HepG2 (cell line): ENCODE measurements at regions of chr15 and their contacts with region 1.

Region 1: DNA sequence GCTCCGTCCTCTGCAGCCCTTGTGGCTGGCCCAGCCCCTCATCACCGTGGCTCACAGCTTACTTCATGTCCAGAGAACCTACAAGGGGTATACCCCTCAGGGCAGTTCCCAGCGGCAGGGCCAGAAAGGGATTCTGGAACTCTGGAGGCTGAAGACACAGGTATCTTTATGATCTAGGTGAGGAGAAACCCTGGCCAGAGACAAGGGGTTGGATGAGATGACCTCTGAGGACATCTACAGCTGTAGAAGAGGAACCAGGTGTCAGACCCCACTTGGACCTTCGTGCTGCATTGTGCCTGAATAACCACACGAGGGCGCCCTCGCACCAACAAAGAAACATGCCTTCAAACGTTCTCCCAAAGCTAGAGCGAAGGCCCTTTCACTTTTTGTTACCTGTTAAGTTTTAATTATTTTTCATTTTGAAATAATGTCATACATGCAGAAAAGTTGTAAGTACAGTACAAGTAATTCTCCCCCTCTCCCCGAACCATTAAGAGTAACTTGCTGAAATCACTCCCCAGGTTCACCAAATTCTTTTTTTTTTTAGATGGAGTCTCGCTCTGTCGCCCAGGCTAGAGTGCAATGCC is 118.7 kb upstream of the SMAD3 start:
- DNase-seq: peak; percentile 67
- ATAC-seq: peak; percentile 65
- H3K4me3 ChIP-seq: peak overlapping the region in 1 of 3 experiments; percentile 25; a peak in 1 of 6 replicates
- H3K27ac ChIP-seq: no peak overlapping the region
- H3K4me1 ChIP-seq: peaks cover 42% of the 10 kb centered on the region
- H3K27me3 ChIP-seq: peaks cover 1 to 16% of the 10 kb centered on the region in 2 experiments; a peak in 3 of 5 replicates
- CTCF ChIP-seq: peak; percentile 93
- EP300 ChIP-seq: no peak
- POLR2A ChIP-seq: no peak
- RAD21 ChIP-seq: peak; percentile 89

Region 2: GRCh38 chr15:66865622-66866611 is 80.8 kb before region 1 on chr15:
- CTCF ChIA-PET with region 1: no interaction called
- POLR2A ChIA-PET with region 1: no interaction called
- in situ Hi-C with region 1: no loop called
- intact Hi-C with region 1: no loop called
- DNase-seq: no peak
- ATAC-seq: no peak
- H3K4me3 ChIP-seq: no peak overlapping the region
- H3K27ac ChIP-seq: no peak overlapping the region
- H3K4me1 ChIP-seq: no peaks in the 10 kb centered on the region
- H3K27me3 ChIP-seq: peaks cover 0 to 6% of the 10 kb centered on the region in 2 experiments; a peak in 2 of 5 replicates
- CTCF ChIP-seq: no peak
- EP300 ChIP-seq: no peak
- POLR2A ChIP-seq: no peak
- RAD21 ChIP-seq: no peak

Region 3: GRCh38 chr15:67303490-67304363 is 357.1 kb after region 1 on chr15:
- CTCF ChIA-PET with region 1: interaction called, 33 read pairs
- POLR2A ChIA-PET with region 1: no interaction called
- in situ Hi-C with region 1: loop called (anchors 5 kb)
- intact Hi-C with region 1: loop called (anchors 1 kb)
- DNase-seq: peak; percentile 49
- ATAC-seq: peak; percentile 64
- H3K4me3 ChIP-seq: no peak overlapping the region
- H3K27ac ChIP-seq: no peak overlapping the region
- H3K4me1 ChIP-seq: no peaks in the 10 kb centered on the region
- H3K27me3 ChIP-seq: no peaks in the 10 kb centered on the region
- CTCF ChIP-seq: peak; percentile 70
- EP300 ChIP-seq: no peak
- POLR2A ChIP-seq: no peak
- RAD21 ChIP-seq: peak; percentile 45; the same call in 1 of the 2 replicates

Region 4: GRCh38 chr15:67433495-67434099 is 486.9 kb after region 1 on chr15:
- CTCF ChIA-PET with region 1: no interaction called
- POLR2A ChIA-PET with region 1: no interaction called
- in situ Hi-C with region 1: loop called (anchors 25 kb)
- intact Hi-C with region 1: loop called (anchors 1 kb)
- DNase-seq: peak; percentile 24
- ATAC-seq: peak; percentile 77
- H3K4me3 ChIP-seq: no peak overlapping the region
- H3K27ac ChIP-seq: no peak overlapping the region
- H3K4me1 ChIP-seq: no peaks in the 10 kb centered on the region
- H3K27me3 ChIP-seq: no peaks in the 10 kb centered on the region
- CTCF ChIP-seq: peak; percentile 71
- EP300 ChIP-seq: no peak
- POLR2A ChIP-seq: no peak
- RAD21 ChIP-seq: 0 out of 2 replicates have a peak, but pooled peaks have one; percentile 12